Activated CD8-positive, alpha-beta T cell treated with anti-CD3 and anti-CD28 coated beads, Interleukin-2, amount 10 ng/mL, durations not matched to agents 7 days and 5 days (primary cell): ENCODE measurements at regions of chr12 and their contacts with region 1.

Region 1: DNA sequence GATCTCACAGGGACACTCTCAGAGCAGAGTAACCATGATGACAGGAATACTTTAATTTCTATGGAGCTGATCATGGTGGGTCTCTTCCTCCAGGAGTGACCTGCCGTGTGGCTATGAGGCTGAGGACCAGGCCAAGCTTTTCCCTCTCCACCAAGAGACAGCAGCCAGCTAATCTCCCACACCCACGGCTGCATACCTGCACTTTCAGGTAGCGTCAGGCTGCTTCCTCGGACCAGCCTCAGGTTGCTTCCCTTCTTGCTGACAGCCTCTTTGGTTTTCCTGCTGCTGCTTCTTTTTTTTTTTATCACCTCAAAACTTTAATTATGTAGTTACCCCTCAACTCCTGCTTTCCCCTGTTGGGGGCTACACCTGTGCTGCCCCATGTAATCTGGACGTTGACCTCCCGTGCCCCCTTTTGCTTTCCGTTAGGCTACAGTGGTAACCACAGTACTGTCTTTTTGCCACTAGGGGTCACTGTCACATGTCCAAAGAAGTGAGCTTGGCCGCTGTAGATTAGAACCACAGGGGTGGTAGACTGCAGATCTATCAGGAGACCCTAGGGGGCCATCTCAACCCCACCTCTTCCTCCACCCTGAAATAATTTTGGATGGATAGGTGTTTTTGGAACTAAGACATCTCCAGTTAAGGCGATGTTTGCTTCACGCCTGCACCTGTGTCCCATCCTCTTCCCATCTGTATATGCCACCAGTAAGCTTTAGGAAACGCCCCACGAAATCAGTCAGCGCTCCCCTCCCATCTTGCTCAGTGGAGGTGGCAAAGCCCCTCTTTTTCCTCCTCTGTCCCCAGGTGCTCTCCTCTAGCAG is 7.8 kb upstream of the PIP4K2C start:
- DNase-seq: peak; percentile 84
- ATAC-seq: peak; percentile 99
- H3K4me3 Mint-ChIP-seq: no peak overlapping the region
- H3K27ac Mint-ChIP-seq: no peak overlapping the region
- H3K4me1 Mint-ChIP-seq: peaks cover 6% of the 10 kb centered on the region
- H3K27me3 Mint-ChIP-seq: no peaks in the 10 kb centered on the region

Region 2: GRCh38 chr12:57441846-57442427 is 141.3 kb before region 1 on chr12:
- CTCF ChIA-PET with region 1: no interaction called
- POLR2A ChIA-PET with region 1: no interaction called
- DNase-seq: no peak
- ATAC-seq: no peak
- H3K4me3 Mint-ChIP-seq: no peak overlapping the region
- H3K27ac Mint-ChIP-seq: no peak overlapping the region
- H3K4me1 Mint-ChIP-seq: no peaks in the 10 kb centered on the region
- H3K27me3 Mint-ChIP-seq: peaks cover 10% of the 10 kb centered on the region

Region 3: GRCh38 chr12:57604454-57604991 is 21.3 kb after region 1 on chr12 and contains the start of gene DTX3:
- CTCF ChIA-PET with region 1: interaction called, 20 read pairs
- POLR2A ChIA-PET with region 1: interaction called, 4 read pairs
- DNase-seq: peak; percentile 58
- ATAC-seq: peak; percentile 65
- H3K4me3 Mint-ChIP-seq: peak within 1 kb of the TSS; percentile 76
- H3K27ac Mint-ChIP-seq: peak within 1 kb of the TSS; percentile 86
- H3K4me1 Mint-ChIP-seq: peaks cover 24% of the 10 kb centered on the region
- H3K27me3 Mint-ChIP-seq: no peaks in the 10 kb centered on the region
- total RNA-seq, gene DTX3: 15.4 to 17.8 TPM

Region 4: GRCh38 chr12:57621497-57622292 is 38.5 kb after region 1 on chr12:
- CTCF ChIA-PET with region 1: interaction called, 87 read pairs
- POLR2A ChIA-PET with region 1: no interaction called
- DNase-seq: peak; percentile 64
- ATAC-seq: peak; percentile 77
- H3K4me3 Mint-ChIP-seq: peak overlapping the region; percentile 63
- H3K27ac Mint-ChIP-seq: no peak overlapping the region
- H3K4me1 Mint-ChIP-seq: peaks cover 30% of the 10 kb centered on the region
- H3K27me3 Mint-ChIP-seq: peaks cover 94% of the 10 kb centered on the region

Region 5: GRCh38 chr12:57632694-57633477 is 49.7 kb after region 1 on chr12 and contains the start of gene B4GALNT1:
- CTCF ChIA-PET with region 1: interaction called, 32 read pairs
- POLR2A ChIA-PET with region 1: no interaction called
- DNase-seq: peak; percentile 65
- ATAC-seq: peak; percentile 80
- H3K4me3 Mint-ChIP-seq: peak within 1 kb of the TSS; percentile 50
- H3K27ac Mint-ChIP-seq: no peak within 1 kb of the TSS
- H3K4me1 Mint-ChIP-seq: peaks cover 15% of the 10 kb centered on the region
- H3K27me3 Mint-ChIP-seq: peaks cover 56% of the 10 kb centered on the region
- total RNA-seq, gene B4GALNT1: 0.84 to 0.99 TPM